B cell (primary cell): ENCODE measurements at regions of chr20 and their contacts with region 1.

Region 1: GRCh38 chr20:34022154-34022838 is 28.6 kb downstream of the RALY start:
- DNase-seq: peak; percentile 48
- ATAC-seq: peak; percentile 66
- H3K4me3 ChIP-seq: no peak overlapping the region
- H3K4me3 Mint-ChIP-seq: peak overlapping the region; percentile 4
- H3K27ac ChIP-seq: peak overlapping the region in 1 of 2 donors; percentile 35
- H3K27ac Mint-ChIP-seq: peak overlapping the region; percentile 57
- H3K4me1 ChIP-seq: peaks cover 58 to 71% of the 10 kb centered on the region in 2 donors
- H3K4me1 Mint-ChIP-seq: peaks cover 82% of the 10 kb centered on the region
- H3K27me3 ChIP-seq: no peaks in the 10 kb centered on the region
- H3K27me3 Mint-ChIP-seq: no peaks in the 10 kb centered on the region
- CTCF ChIP-seq: peak; percentile 55

Region 2: GRCh38 chr20:33915726-33916331 is 106.5 kb before region 1 on chr20:
- CTCF ChIA-PET with region 1: interaction called, 10 read pairs
- POLR2A ChIA-PET with region 1: no interaction called
- intact Hi-C with region 1: no loop called
- DNase-seq: peak; percentile 56
- ATAC-seq: no peak
- H3K4me3 ChIP-seq: no peak overlapping the region
- H3K4me3 Mint-ChIP-seq: no peak overlapping the region
- H3K27ac ChIP-seq: no peak overlapping the region
- H3K27ac Mint-ChIP-seq: no peak overlapping the region
- H3K4me1 ChIP-seq: peaks cover 2 to 15% of the 10 kb centered on the region in 2 donors
- H3K4me1 Mint-ChIP-seq: peaks cover 13% of the 10 kb centered on the region
- H3K27me3 ChIP-seq: peaks cover 0 to 3% (median 0%) of the 10 kb centered on the region in 4 experiments
- H3K27me3 Mint-ChIP-seq: peaks cover 13% of the 10 kb centered on the region
- CTCF ChIP-seq: peak; percentile 74

Region 3: DNA sequence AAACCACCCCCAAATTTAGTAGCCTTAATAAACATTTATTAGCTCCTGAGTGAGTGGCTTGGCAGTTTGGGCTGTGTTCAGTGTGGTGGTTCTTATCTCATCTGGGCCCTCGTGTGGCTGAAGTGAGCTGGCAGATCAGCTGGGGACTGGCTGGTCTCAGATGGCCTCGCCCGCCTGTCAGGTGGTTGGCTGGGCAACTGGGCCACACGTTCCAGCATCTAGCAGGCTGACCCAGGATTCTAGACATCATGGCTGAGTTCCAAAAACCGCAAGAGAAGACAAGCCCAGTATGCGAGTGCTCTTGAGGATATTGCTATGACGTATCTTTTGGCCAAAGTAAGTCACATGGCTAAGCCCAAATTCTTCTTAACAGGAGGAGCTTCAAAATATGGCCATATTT is 60.8 kb after region 1 on chr20:
- CTCF ChIA-PET with region 1: no interaction called
- POLR2A ChIA-PET with region 1: no interaction called
- intact Hi-C with region 1: no loop called
- DNase-seq: no peak
- ATAC-seq: no peak
- H3K4me3 ChIP-seq: no peak overlapping the region
- H3K4me3 Mint-ChIP-seq: no peak overlapping the region
- H3K27ac ChIP-seq: peak overlapping the region in 1 of 2 donors; percentile 35
- H3K27ac Mint-ChIP-seq: peak overlapping the region; percentile 11
- H3K4me1 ChIP-seq: peaks cover 3 to 5% of the 10 kb centered on the region in 2 donors
- H3K4me1 Mint-ChIP-seq: peaks cover 14% of the 10 kb centered on the region
- H3K27me3 ChIP-seq: no peaks in the 10 kb centered on the region
- H3K27me3 Mint-ChIP-seq: no peaks in the 10 kb centered on the region
- CTCF ChIP-seq: no peak

Region 4: DNA sequence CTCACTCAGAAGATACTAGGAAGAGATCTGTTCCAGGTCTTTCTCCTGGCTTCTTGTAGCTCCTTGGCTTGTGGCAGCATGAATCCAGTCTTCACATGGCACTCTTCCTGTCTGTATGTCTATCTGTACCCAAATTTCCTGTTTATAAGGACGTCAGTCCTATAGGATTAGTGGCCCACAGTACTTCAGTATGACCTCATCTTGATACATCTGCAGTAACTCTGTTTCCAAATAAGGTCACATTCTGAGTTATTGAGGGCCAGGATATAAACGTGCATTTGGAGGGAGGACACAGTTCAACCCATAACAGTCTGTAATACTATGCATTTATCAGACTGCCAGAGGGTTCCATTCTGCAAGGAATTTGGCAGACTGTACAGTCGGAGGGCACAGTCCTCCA is 436.3 kb after region 1 on chr20:
- CTCF ChIA-PET with region 1: no interaction called
- POLR2A ChIA-PET with region 1: no interaction called
- intact Hi-C with region 1: no loop called
- DNase-seq: no peak
- ATAC-seq: no peak
- H3K4me3 ChIP-seq: no peak overlapping the region
- H3K4me3 Mint-ChIP-seq: no peak overlapping the region
- H3K27ac ChIP-seq: peak overlapping the region in 1 of 2 donors; percentile 74
- H3K27ac Mint-ChIP-seq: peak overlapping the region; percentile 50
- H3K4me1 ChIP-seq: peaks cover 10 to 15% of the 10 kb centered on the region in 2 donors
- H3K4me1 Mint-ChIP-seq: peaks cover 20% of the 10 kb centered on the region
- H3K27me3 ChIP-seq: no peaks in the 10 kb centered on the region
- H3K27me3 Mint-ChIP-seq: no peaks in the 10 kb centered on the region
- CTCF ChIP-seq: no peak